SK-N-SH (cell line): ENCODE measurements at regions of chr14 and their contacts with region 1.

Region 1: DNA sequence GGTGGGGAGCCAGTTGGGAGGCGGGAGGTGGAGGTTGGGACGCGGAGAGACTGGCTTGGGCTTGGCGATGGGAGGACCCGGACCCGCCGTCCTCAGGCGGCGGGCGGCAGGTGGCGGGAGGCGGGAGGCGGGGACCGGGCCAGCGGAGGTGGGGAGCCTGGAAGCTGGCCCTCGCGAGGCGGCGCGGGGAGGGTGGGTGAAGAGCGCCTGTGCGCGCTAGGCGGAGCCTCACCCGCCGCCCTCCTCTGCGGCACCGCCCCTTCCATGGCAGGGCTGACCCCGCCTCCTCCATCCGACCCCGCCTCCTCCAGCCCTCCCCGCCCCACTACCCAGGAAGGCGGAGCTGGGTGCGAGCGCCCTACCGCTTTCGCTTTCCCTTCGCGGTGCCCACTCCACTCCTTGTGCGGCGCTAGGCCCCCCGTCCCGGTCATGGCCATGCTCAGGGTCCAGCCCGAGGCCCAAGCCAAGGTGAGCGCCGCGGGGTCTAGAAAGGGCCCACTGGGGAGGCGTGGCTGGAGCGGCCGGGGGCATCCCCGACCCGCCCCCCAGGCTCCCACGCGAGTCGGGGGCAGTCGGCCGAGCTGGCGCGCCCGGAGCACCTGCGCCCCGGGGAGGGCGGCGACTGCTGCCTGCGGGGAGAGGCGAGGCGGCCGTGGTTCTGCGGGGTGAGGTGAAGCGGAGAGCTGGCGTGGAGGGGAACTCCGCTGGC is at the start of gene PSME1:
- DNase-seq: peak; percentile 98
- H3K4me3 ChIP-seq: peak within 1 kb of the TSS; percentile 82 to 91
- H3K27ac ChIP-seq: peak within 1 kb of the TSS; percentile 52 to 83
- H3K4me1 ChIP-seq: peaks cover 6 to 36% of the 10 kb centered on the region in 2 experiments; a peak in 2 of 4 replicates
- H3K27me3 ChIP-seq: no peaks in the 10 kb centered on the region
- CTCF ChIP-seq: no peak
- EP300 ChIP-seq: no peak
- RAD21 ChIP-seq: no peak; the same call in 1 of the 2 replicates
- polyA plus RNA-seq, gene PSME1: 154 and 287 TPM in 2 replicates

Region 2: GRCh38 chr14:24042746-24043145 is 93.2 kb before region 1 on chr14:
- CTCF ChIA-PET with region 1: no interaction called
- POLR2A ChIA-PET with region 1: no interaction called
- DNase-seq: no peak
- H3K4me3 ChIP-seq: no peak overlapping the region
- H3K27ac ChIP-seq: no peak overlapping the region
- H3K4me1 ChIP-seq: no peaks in the 10 kb centered on the region; a peak in 1 of 4 replicates
- H3K27me3 ChIP-seq: no peaks in the 10 kb centered on the region; the same call in 1 of the 2 replicates
- CTCF ChIP-seq: no peak
- EP300 ChIP-seq: no peak
- RAD21 ChIP-seq: no peak

Region 3: GRCh38 chr14:24108336-24108874 is 27.6 kb before region 1 on chr14:
- CTCF ChIA-PET with region 1: interaction called, 22 read pairs
- POLR2A ChIA-PET with region 1: interaction called, 21 read pairs
- DNase-seq: no peak
- H3K4me3 ChIP-seq: peak overlapping the region in 1 of 2 experiments; percentile 24; a peak in 1 of 4 replicates
- H3K27ac ChIP-seq: no peak overlapping the region
- H3K4me1 ChIP-seq: peaks cover 0 to 2% of the 10 kb centered on the region in 2 experiments; a peak in 1 of 4 replicates
- H3K27me3 ChIP-seq: no peaks in the 10 kb centered on the region
- CTCF ChIP-seq: no peak
- EP300 ChIP-seq: no peak
- RAD21 ChIP-seq: no peak

Region 4: GRCh38 chr14:24146978-24147760 is 11.2 kb after region 1 on chr14 and contains the start of gene RNF31:
- CTCF ChIA-PET with region 1: interaction called, 3 read pairs
- POLR2A ChIA-PET with region 1: interaction called, 12 read pairs
- DNase-seq: peak; percentile 96
- H3K4me3 ChIP-seq: peak within 1 kb of the TSS; percentile 93 to 98
- H3K27ac ChIP-seq: peak within 1 kb of the TSS; percentile 92 to 97
- H3K4me1 ChIP-seq: peaks cover 11 to 22% of the 10 kb centered on the region in 2 experiments
- H3K27me3 ChIP-seq: no peaks in the 10 kb centered on the region
- CTCF ChIP-seq: no peak
- EP300 ChIP-seq: no peak
- RAD21 ChIP-seq: no peak
- polyA plus RNA-seq, gene RNF31: 19.2 and 20.4 TPM in 2 replicates

Region 5: GRCh38 chr14:24332268-24332993 is 196.4 kb after region 1 on chr14:
- CTCF ChIA-PET with region 1: no interaction called
- POLR2A ChIA-PET with region 1: no interaction called
- DNase-seq: peak; percentile 94
- H3K4me3 ChIP-seq: peak overlapping the region in 1 of 2 experiments; percentile 30; a peak in 3 of 4 replicates
- H3K27ac ChIP-seq: no peak overlapping the region
- H3K4me1 ChIP-seq: peaks cover 0 to 21% of the 10 kb centered on the region in 2 experiments; a peak in 1 of 4 replicates
- H3K27me3 ChIP-seq: peaks cover 31% of the 10 kb centered on the region
- CTCF ChIP-seq: peak; percentile 68
- EP300 ChIP-seq: no peak
- RAD21 ChIP-seq: peak; percentile 59

Region 6: GRCh38 chr14:24351517-24351916 is 215.5 kb after region 1 on chr14:
- CTCF ChIA-PET with region 1: no interaction called
- POLR2A ChIA-PET with region 1: no interaction called
- DNase-seq: no peak
- H3K4me3 ChIP-seq: no peak overlapping the region
- H3K27ac ChIP-seq: no peak overlapping the region
- H3K4me1 ChIP-seq: no peaks in the 10 kb centered on the region; a peak in 1 of 4 replicates
- H3K27me3 ChIP-seq: peaks cover 64% of the 10 kb centered on the region
- CTCF ChIP-seq: peak; percentile 17; the same call in 1 of the 2 replicates
- EP300 ChIP-seq: no peak
- RAD21 ChIP-seq: peak; percentile 26; the same call in 1 of the 2 replicates